ENCODE measurements at regions of chr10 and their contacts with region 1.

Region 1: DNA sequence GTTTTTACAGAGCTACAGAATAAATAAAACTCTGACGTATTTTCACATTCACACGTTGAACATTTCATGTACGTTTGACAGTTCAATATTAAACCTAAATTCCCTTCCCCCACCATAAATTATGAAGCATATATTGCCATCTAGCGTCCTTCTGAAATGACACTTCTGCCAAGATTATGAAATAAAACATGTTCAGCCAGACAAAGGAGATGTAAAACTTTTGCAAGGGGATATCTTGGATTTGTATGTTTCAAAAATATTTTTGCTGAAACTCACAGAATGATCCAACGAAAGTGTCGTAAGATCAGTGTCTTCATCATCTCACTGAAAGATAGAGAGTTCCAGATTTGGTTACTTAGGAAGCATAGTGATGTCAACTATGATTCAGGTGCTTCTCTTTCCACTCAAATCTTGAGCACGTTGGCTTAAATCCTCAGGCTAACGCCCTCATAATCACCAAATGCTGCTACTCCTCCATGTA is 904.3 kb downstream of the XPNPEP1 start:
- DNase-seq: peak; percentile 43
- H3K4me3 ChIP-seq: no peak overlapping the region
- H3K27ac ChIP-seq: no peak overlapping the region
- H3K4me1 ChIP-seq: peaks cover 7% of the 10 kb centered on the region
- H3K27me3 ChIP-seq: no peaks in the 10 kb centered on the region
- CTCF ChIP-seq: peak; percentile 58

Region 2: GRCh38 chr10:107450056-107450455 is 1568.9 kb before region 1 on chr10:
- CTCF ChIA-PET with region 1: no interaction called
- POLR2A ChIA-PET with region 1: interaction called, 10 read pairs
- intact Hi-C with region 1: no loop called
- DNase-seq: no peak
- H3K4me3 ChIP-seq: no peak overlapping the region
- H3K27ac ChIP-seq: no peak overlapping the region
- H3K4me1 ChIP-seq: no peaks in the 10 kb centered on the region
- H3K27me3 ChIP-seq: no peaks in the 10 kb centered on the region
- CTCF ChIP-seq: no peak

Region 3: DNA sequence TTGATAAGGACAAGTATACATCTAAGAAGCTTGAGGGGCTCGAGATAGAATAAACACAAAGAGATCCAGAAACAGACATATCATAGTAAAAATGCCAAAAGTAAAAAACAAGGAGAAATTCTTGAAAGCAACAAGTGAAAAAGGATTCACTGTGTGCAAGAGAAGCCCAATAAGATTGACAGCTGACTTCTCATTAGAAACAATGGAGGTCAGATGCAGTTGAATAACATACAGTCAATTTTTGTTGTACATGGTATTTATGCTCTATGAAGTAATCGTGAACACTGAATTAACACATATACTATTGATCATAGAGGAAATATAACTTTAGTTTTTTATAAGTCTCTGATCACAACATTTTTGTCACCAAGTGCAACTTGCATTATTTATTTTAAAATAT is 871.6 kb before region 1 on chr10:
- CTCF ChIA-PET with region 1: no interaction called
- POLR2A ChIA-PET with region 1: no interaction called
- intact Hi-C with region 1: no loop called
- DNase-seq: no peak
- H3K4me3 ChIP-seq: no peak overlapping the region
- H3K27ac ChIP-seq: no peak overlapping the region
- H3K4me1 ChIP-seq: no peaks in the 10 kb centered on the region
- H3K27me3 ChIP-seq: no peaks in the 10 kb centered on the region
- CTCF ChIP-seq: no peak

Region 4: DNA sequence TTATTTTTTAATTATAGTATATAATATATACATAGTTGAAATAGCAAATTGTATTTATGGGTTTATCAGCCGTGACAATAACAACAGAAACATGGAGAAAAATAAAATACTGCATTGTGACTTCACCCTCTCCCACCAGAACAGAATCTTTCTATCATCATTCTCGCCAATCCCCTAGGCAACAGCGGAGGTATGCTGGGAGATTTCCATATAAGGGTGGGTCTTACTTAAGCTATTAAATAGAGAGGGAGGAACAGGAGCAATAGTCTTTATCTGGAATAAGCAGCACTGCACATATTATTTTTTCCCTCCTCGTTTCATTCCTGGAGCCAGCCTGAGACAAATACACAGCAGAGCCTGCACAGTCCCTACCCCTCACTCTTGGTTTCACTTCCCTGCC is 310.6 kb before region 1 on chr10:
- CTCF ChIA-PET with region 1: no interaction called
- POLR2A ChIA-PET with region 1: no interaction called
- intact Hi-C with region 1: no loop called
- DNase-seq: no peak
- H3K4me3 ChIP-seq: no peak overlapping the region
- H3K27ac ChIP-seq: no peak overlapping the region
- H3K4me1 ChIP-seq: peaks cover 7% of the 10 kb centered on the region
- H3K27me3 ChIP-seq: no peaks in the 10 kb centered on the region
- CTCF ChIP-seq: no peak

Region 5: DNA sequence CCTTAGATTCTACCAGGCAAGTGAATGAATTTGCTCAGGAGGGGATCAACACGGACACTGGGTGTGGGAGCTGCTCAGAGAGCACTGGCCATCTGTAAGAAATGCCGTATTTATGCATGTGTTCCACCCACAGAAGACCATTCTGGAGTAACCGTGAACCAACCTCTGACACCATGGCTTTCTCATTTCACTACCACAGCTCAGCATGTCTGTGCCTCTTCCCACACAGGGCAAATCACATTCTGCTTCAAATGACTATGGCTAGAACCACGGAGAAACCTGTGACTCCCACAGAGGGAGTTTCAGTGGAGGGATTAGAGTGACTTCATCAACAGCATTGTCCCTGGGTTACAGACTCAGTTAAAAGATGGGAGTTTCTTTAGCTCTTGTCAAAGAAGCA is 10.9 kb after region 1 on chr10:
- CTCF ChIA-PET with region 1: no interaction called
- POLR2A ChIA-PET with region 1: no interaction called
- intact Hi-C with region 1: no loop called
- DNase-seq: no peak
- H3K4me3 ChIP-seq: no peak overlapping the region
- H3K27ac ChIP-seq: no peak overlapping the region
- H3K4me1 ChIP-seq: no peaks in the 10 kb centered on the region
- H3K27me3 ChIP-seq: no peaks in the 10 kb centered on the region
- CTCF ChIP-seq: no peak